Activated CD4-positive, alpha-beta T cell treated with anti-CD3 and anti-CD28 coated beads for 36 hours (primary cell): ENCODE measurements at regions of chr2 and their contacts with region 1.

Region 1: GRCh38 chr2:127479219-127479825 is 47.0 kb downstream of the IWS1 start:
- DNase-seq: no peak
- ATAC-seq: peak; percentile 75
- H3K4me3 Mint-ChIP-seq: no peak overlapping the region
- H3K27ac Mint-ChIP-seq: no peak overlapping the region
- H3K4me1 Mint-ChIP-seq: no peaks in the 10 kb centered on the region
- H3K27me3 Mint-ChIP-seq: no peaks in the 10 kb centered on the region

Region 2: GRCh38 chr2:127064642-127065250 is 414.6 kb before region 1 on chr2:
- CTCF ChIA-PET with region 1: no interaction called
- POLR2A ChIA-PET with region 1: no interaction called
- intact Hi-C with region 1: loop called in 1 of 2 experiments (anchors 2 kb)
- DNase-seq: peak; percentile 92
- ATAC-seq: peak; percentile 95
- H3K4me3 Mint-ChIP-seq: no peak overlapping the region
- H3K27ac Mint-ChIP-seq: peak overlapping the region; percentile 72
- H3K4me1 Mint-ChIP-seq: peaks cover 27% of the 10 kb centered on the region
- H3K27me3 Mint-ChIP-seq: no peaks in the 10 kb centered on the region

Region 3: GRCh38 chr2:127293748-127294562 is 185.4 kb before region 1 on chr2 and contains the start of gene ERCC3:
- CTCF ChIA-PET with region 1: interaction called, 11 read pairs
- POLR2A ChIA-PET with region 1: no interaction called
- intact Hi-C with region 1: no loop called
- DNase-seq: peak; percentile 90
- ATAC-seq: peak; percentile 98
- H3K4me3 Mint-ChIP-seq: peak within 1 kb of the TSS; percentile 98
- H3K27ac Mint-ChIP-seq: peak within 1 kb of the TSS; percentile 100
- H3K4me1 Mint-ChIP-seq: peaks cover 20% of the 10 kb centered on the region
- H3K27me3 Mint-ChIP-seq: no peaks in the 10 kb centered on the region
- total RNA-seq, gene ERCC3: 49.5 to 49.8 TPM

Region 4: DNA sequence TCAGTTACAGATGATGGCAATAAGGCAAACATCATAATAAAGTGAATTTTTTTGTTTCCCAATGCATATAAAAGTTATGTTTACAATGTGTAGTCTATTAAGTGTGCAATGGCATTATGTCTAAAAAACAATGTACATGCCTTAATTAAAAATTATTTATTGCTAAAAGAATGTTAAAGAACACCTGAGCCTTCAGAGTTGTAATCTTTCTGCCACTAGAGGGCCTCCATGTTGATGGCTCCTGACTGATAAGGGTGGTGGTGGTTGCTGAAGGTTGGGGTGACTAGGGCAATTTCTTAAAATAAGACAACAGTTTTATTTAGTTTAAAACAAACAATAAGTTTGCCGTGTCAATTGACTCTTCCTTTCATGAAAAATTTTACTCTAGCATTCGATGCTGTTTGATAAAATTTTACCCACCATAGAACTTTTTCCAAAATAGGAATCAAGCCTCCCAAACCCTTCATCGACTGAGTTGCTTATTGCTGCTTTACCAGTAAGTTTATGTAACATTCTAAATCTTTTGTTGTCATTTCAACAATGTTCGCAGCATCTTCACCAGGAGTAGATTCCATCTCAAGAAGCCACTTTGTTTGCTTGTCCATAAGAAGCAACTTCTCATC is 123.8 kb before region 1 on chr2:
- CTCF ChIA-PET with region 1: interaction called, 6 read pairs
- POLR2A ChIA-PET with region 1: no interaction called
- intact Hi-C with region 1: loop called (anchors 1 kb)
- DNase-seq: peak; percentile 45
- ATAC-seq: peak; percentile 65
- H3K4me3 Mint-ChIP-seq: no peak overlapping the region
- H3K27ac Mint-ChIP-seq: no peak overlapping the region
- H3K4me1 Mint-ChIP-seq: peaks cover 53% of the 10 kb centered on the region
- H3K27me3 Mint-ChIP-seq: no peaks in the 10 kb centered on the region

Region 5: GRCh38 chr2:127490283-127490682 is 11.0 kb after region 1 on chr2:
- CTCF ChIA-PET with region 1: interaction called, 11 read pairs
- POLR2A ChIA-PET with region 1: no interaction called
- intact Hi-C with region 1: no loop called
- DNase-seq: no peak
- ATAC-seq: no peak
- H3K4me3 Mint-ChIP-seq: no peak overlapping the region
- H3K27ac Mint-ChIP-seq: no peak overlapping the region
- H3K4me1 Mint-ChIP-seq: peaks cover 18% of the 10 kb centered on the region
- H3K27me3 Mint-ChIP-seq: no peaks in the 10 kb centered on the region

Region 6: DNA sequence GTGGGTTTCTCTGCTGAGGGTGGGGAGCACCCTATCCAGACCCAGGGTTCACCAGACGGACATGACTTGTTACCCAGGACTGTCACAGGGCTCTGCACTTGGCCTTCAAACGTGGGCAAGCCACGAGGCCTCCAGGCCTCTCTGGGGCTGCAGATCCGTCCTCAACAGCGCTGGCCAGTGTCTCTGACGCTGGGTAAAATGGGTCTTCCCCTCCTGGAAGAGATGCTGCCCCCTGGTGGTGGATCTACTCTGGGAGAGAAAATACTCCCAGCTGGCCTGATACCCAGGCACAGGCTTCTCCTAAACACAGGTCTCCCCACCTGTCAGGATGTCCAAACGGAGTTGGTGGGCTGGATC is 170.3 kb after region 1 on chr2:
- CTCF ChIA-PET with region 1: no interaction called
- POLR2A ChIA-PET with region 1: no interaction called
- intact Hi-C with region 1: loop called in 1 of 2 experiments (anchors 5 kb)
- DNase-seq: peak; percentile 92
- ATAC-seq: peak; percentile 85
- H3K4me3 Mint-ChIP-seq: no peak overlapping the region
- H3K27ac Mint-ChIP-seq: no peak overlapping the region
- H3K4me1 Mint-ChIP-seq: peaks cover 10% of the 10 kb centered on the region
- H3K27me3 Mint-ChIP-seq: no peaks in the 10 kb centered on the region